OCI-LY7 (cell line): ENCODE measurements at regions of chr13 and their contacts with region 1.

Region 1: DNA sequence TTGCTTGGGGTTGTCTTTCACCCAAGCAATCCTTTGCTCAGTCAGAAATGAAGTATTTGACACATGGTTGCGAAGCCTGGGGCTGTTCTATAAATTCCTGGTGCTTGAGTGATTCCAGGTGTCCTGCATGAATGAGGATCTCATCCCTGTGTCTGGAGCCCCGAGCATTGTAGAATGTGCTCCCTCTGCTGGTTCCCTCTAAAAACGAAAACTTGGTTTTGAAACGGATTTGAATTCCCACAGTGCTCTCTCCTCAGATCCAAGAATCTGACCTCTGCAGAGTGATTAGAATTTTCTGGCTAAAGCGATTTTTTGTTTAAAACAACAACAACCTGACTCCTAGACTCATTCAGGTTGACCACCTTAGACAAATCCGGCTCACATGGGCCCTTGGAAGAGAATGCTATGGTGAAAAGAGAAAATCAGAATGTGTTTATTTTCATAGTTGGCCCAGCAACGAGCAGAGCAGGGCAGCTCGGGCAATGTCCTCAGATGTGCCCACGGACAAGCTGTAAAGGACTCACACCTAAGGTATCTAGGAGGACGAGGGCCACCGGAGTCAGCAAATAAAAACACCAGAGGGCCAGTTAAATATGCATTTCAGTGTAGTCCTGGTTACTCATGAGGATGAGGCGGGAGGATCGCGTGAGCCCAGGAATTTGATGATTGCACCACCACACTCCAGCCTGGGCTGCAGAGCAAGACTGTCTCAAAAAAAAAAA is 8.7 kb upstream of the ATP12A start:
- DNase-seq: peak; percentile 59
- H3K4me3 ChIP-seq: peak overlapping the region; percentile 45
- H3K27ac ChIP-seq: no peak overlapping the region
- H3K4me1 ChIP-seq: peaks cover 19% of the 10 kb centered on the region
- CTCF ChIP-seq: peak; percentile 89

Region 2: DNA sequence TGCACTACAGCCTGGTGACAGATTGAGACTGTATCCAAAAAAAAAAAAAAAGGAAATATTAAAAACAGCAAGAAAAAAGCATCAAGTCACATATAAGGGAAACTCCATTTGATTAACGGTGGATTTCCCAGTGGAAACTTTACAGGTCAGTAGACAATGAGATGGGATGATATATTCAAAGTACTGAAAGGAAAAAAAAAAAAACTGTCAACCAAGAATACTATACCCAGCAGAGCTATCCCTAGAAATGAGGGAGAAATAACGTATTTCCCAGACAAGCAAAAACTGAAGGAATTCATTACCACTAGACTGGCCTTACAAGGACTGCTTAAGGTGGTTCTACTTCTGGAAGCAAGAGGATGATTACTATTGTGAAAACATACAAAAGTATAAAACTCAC is 274.7 kb before region 1 on chr13:
- CTCF ChIA-PET with region 1: no interaction called
- POLR2A ChIA-PET with region 1: no interaction called
- intact Hi-C with region 1: no loop called
- DNase-seq: no peak
- H3K4me3 ChIP-seq: no peak overlapping the region
- H3K27ac ChIP-seq: no peak overlapping the region
- H3K4me1 ChIP-seq: no peaks in the 10 kb centered on the region
- CTCF ChIP-seq: no peak

Region 3: DNA sequence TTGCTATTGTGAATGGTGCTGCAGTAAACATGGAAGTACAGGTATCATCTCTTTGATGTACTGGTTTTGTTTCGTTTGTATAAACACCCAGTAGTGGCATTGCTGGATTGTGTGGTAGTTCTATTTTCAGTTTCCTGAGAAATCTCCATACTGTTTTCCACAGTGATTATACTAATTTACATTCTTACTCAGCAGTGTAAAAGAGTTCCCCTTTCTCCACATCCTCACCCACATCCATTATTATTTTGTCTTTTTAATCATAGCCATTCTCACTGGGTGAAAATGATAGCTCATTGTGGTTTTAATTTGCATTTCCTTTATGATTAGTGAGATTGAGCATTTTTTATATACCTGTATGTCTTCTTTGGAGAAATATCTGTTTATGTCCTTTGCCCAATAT is 96.7 kb before region 1 on chr13:
- CTCF ChIA-PET with region 1: no interaction called
- POLR2A ChIA-PET with region 1: interaction called, 4 read pairs
- intact Hi-C with region 1: loop called (anchors 1 kb)
- DNase-seq: no peak
- H3K4me3 ChIP-seq: no peak overlapping the region
- H3K27ac ChIP-seq: no peak overlapping the region
- H3K4me1 ChIP-seq: peaks cover 3% of the 10 kb centered on the region
- CTCF ChIP-seq: no peak

Region 4: DNA sequence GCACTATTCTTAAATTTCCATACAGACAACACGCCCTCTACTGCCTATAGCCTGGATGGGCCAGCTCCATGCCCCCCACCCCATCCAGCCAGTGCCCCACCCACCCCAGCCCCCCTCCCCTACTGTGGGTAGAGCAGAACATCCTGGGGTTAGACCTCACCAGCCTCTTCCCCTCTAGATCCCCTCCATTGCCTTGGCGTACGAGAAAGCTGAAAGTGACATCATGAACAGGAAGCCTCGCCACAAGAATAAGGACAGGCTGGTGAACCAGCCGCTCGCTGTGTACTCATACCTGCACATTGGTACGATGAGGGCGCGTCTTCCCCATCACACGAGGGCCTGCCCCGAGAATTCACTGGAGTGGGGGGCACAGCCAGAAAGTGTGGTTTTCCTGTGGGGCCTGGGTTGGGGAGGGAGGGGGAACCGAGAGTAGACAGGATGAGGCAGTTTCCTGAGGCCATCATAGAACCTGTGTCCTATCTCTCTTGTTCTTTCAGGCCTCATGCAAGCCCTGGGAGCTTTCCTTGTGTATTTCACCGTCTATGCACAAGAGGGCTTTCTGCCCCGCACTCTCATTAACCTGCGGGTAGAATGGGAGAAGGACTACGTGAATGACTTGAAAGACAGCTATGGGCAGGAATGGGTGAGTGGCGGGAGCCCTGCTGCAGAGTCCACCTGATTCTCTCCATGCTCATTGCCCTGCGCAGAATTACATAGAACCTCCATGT is 37.8 kb after region 1 on chr13:
- CTCF ChIA-PET with region 1: no interaction called
- POLR2A ChIA-PET with region 1: no interaction called
- intact Hi-C with region 1: no loop called
- DNase-seq: no peak
- H3K4me3 ChIP-seq: no peak overlapping the region
- H3K27ac ChIP-seq: no peak overlapping the region
- H3K4me1 ChIP-seq: no peaks in the 10 kb centered on the region
- CTCF ChIP-seq: no peak